Caco-2 (cell line): ENCODE measurements at regions of chr17 and their contacts with region 1.

Region 1: DNA sequence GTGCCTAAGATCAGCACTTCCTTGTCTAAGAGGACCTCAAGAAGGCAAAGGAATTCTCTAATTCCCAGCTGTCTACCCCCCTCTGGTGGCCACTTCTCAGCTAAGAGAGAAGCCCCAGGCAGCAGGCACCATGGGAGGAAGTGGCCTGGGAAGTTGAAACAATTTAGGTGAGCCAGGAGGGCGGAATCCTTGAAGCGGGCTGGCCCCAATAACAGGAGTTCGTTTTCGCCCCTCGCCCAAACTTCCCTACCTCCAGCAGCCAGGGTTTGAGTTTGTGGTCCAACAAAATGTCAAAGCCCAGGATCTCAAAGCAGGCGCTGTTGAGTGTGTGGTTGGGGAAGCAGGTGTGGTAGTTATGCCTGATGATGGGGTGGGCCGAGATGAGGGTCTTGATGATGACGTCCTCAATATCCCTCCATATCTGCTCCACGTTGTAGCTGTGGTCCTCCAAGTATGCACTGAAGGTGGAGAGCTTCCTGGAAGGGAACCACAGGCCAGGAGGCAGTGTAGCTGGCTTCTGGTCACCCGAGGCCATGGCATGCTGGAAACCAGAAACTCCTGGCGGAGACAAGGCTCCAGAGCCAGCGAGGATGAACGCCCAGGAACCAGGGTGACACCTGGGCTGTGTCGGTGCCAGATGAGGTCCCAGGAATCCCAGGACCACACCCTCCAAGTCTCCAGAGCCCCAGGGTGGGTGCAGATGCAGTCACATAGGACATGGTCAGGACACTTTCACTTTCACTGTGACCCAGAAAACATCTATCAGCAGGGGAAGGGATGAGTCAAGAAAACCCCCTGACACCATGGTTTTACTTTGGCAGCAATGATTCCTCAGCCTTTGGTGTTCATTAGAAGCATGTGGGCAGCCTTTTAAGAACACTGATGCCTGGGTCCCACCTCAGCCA is 25.6 kb downstream of the TTLL6 start:
- DNase-seq: peak; percentile 97
- H3K4me3 ChIP-seq: no peak overlapping the region
- H3K4me3 Mint-ChIP-seq: no peak overlapping the region
- H3K27ac Mint-ChIP-seq: peak overlapping the region; percentile 51
- H3K4me1 ChIP-seq: peaks cover 50% of the 10 kb centered on the region
- H3K4me1 Mint-ChIP-seq: peaks cover 52% of the 10 kb centered on the region
- H3K27me3 ChIP-seq: no peaks in the 10 kb centered on the region
- H3K27me3 Mint-ChIP-seq: no peaks in the 10 kb centered on the region
- CTCF ChIP-seq: peak; percentile 98 to 100

Region 2: GRCh38 chr17:48241131-48241591 is 550.2 kb before region 1 on chr17:
- CTCF ChIA-PET with region 1: no interaction called
- POLR2A ChIA-PET with region 1: no interaction called
- intact Hi-C with region 1: loop called (anchors 5 kb)
- DNase-seq: peak in 1 of 2 experiments; percentile 68
- H3K4me3 ChIP-seq: no peak overlapping the region
- H3K4me3 Mint-ChIP-seq: no peak overlapping the region
- H3K27ac Mint-ChIP-seq: no peak overlapping the region
- H3K4me1 ChIP-seq: peaks cover 63% of the 10 kb centered on the region
- H3K4me1 Mint-ChIP-seq: peaks cover 57% of the 10 kb centered on the region
- H3K27me3 ChIP-seq: no peaks in the 10 kb centered on the region
- H3K27me3 Mint-ChIP-seq: no peaks in the 10 kb centered on the region
- CTCF ChIP-seq: no peak

Region 3: DNA sequence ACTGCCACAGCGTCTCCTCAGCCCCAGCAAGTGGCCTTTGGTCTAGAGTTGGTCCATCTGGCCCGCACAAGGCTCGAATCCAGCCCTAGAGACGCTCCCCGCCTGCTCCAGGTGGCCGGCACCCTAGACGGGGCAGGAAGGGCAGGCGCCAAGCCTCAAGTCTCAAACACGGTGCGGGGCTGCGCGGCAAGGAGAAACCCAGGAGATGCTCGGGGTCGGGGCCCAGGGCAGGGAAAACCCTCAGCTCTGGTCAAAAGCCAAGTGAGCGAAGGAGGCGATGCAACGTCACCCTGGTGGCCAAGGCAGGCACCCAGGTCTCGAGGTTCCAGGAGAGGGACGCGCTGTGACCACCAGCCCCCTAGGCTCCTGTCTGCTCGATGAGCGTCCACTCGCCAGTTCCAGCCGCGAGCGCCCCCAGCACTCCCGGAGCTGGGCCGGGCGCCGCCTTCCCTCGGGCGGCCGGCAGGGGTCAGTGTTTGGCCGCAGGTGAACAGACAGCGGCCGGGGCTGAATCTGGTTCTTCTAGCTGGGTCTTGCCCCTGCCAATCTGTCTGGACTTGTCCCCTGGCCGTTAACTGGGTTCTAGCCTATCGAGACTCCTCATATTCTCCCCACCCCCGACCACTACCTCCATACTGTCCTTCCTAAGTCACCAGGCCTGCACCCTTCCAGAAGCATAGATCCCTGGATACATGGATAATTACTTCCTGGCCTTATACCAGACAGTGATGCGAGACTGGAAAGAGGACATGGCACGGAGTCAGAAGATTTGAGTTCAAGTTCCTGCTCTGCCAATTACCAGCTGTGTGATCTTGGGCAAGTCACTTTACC is 113.0 kb before region 1 on chr17:
- CTCF ChIA-PET with region 1: interaction called, 84 read pairs
- POLR2A ChIA-PET with region 1: no interaction called
- intact Hi-C with region 1: loop called (anchors 1 kb)
- DNase-seq: peak; percentile 69 to 87
- H3K4me3 ChIP-seq: no peak overlapping the region
- H3K4me3 Mint-ChIP-seq: no peak overlapping the region
- H3K27ac Mint-ChIP-seq: no peak overlapping the region
- H3K4me1 ChIP-seq: no peaks in the 10 kb centered on the region
- H3K4me1 Mint-ChIP-seq: no peaks in the 10 kb centered on the region
- H3K27me3 ChIP-seq: no peaks in the 10 kb centered on the region
- H3K27me3 Mint-ChIP-seq: peaks cover 8% of the 10 kb centered on the region
- CTCF ChIP-seq: peak; percentile 99

Region 4: DNA sequence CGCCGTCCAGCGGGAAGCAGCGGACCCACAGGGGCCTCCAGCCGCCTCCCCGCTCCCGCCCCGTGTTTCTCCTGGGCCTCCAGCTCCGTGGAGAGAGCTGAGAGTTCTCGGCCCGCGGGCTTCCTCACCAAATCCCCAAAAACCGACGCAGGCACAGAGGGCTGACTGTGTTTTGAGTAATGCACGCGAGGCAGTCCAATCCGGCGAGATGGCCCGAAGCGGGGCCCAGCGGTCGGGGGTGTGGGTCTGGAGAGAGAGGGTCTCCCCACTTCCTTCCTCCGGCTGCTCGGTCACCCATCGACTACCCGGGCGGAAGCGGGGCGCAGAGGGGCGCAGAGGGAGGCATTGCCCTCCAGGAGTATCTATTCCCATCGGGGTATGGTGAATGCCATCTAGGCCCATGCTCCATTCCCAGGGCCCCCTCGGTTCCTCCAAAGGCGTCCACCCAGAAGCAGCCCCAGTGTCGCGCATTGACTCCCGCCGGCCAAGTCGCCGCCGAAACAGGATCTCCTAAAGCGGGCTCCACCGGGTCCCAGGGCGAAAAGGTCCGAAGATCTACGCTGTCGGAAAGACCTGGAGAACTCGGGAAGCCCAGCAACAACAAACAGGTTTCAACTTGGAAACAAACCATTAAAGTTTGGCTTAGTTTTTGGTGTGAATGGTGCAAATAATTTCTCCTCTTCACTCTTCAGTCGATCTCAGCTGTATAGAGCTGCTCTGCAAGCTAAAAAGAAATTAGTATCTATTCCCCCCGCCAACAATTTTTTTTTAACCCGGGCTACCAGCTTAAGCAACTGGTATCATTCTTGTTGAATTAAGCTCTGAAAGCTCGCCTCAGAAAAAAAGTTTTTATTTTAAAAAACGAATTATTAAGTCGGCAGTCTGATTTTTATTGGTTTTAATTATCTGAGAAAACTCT is 43.7 kb before region 1 on chr17:
- CTCF ChIA-PET with region 1: interaction called, 16 read pairs
- POLR2A ChIA-PET with region 1: no interaction called
- intact Hi-C with region 1: no loop called
- DNase-seq: no peak
- H3K4me3 ChIP-seq: no peak overlapping the region
- H3K4me3 Mint-ChIP-seq: no peak overlapping the region
- H3K27ac Mint-ChIP-seq: no peak overlapping the region
- H3K4me1 ChIP-seq: peaks cover 9% of the 10 kb centered on the region
- H3K4me1 Mint-ChIP-seq: peaks cover 20% of the 10 kb centered on the region
- H3K27me3 ChIP-seq: peaks cover 1% of the 10 kb centered on the region; the same call in 1 of the 2 replicates
- H3K27me3 Mint-ChIP-seq: peaks cover 16% of the 10 kb centered on the region
- CTCF ChIP-seq: no peak

Region 5: GRCh38 chr17:48804925-48805411 is 13.6 kb after region 1 on chr17:
- CTCF ChIA-PET with region 1: interaction called, 10 read pairs
- POLR2A ChIA-PET with region 1: no interaction called
- intact Hi-C with region 1: no loop called
- DNase-seq: peak; percentile 86 to 95
- H3K4me3 ChIP-seq: no peak overlapping the region
- H3K4me3 Mint-ChIP-seq: no peak overlapping the region
- H3K27ac Mint-ChIP-seq: no peak overlapping the region
- H3K4me1 ChIP-seq: peaks cover 15% of the 10 kb centered on the region
- H3K4me1 Mint-ChIP-seq: peaks cover 17% of the 10 kb centered on the region
- H3K27me3 ChIP-seq: no peaks in the 10 kb centered on the region
- H3K27me3 Mint-ChIP-seq: no peaks in the 10 kb centered on the region
- CTCF ChIP-seq: peak; percentile 100

Region 6: GRCh38 chr17:48908047-48908843 is 116.9 kb after region 1 on chr17 and contains the start of gene UBE2Z:
- CTCF ChIA-PET with region 1: no interaction called
- POLR2A ChIA-PET with region 1: interaction called, 11 read pairs
- intact Hi-C with region 1: no loop called
- DNase-seq: peak; percentile 99
- H3K4me3 ChIP-seq: peak within 1 kb of the TSS; percentile 94
- H3K4me3 Mint-ChIP-seq: peak within 1 kb of the TSS; percentile 89
- H3K27ac Mint-ChIP-seq: peak within 1 kb of the TSS; percentile 95
- H3K4me1 ChIP-seq: peaks cover 26% of the 10 kb centered on the region
- H3K4me1 Mint-ChIP-seq: peaks cover 37% of the 10 kb centered on the region
- H3K27me3 ChIP-seq: no peaks in the 10 kb centered on the region
- H3K27me3 Mint-ChIP-seq: no peaks in the 10 kb centered on the region
- CTCF ChIP-seq: peak in 1 of 2 experiments; percentile 68
- total RNA-seq, gene UBE2Z: 182 and 187 TPM in 2 replicates